Activated CD4-positive, alpha-beta T cell treated with anti-CD3 and anti-CD28 coated beads for 36 hours (primary cell): ENCODE measurements at regions of chr3 and their contacts with region 1.

Region 1: GRCh38 chr3:152268555-152269425 is at the start of gene MBNL1:
- DNase-seq: peak; percentile 93
- ATAC-seq: peak; percentile 69
- H3K4me3 Mint-ChIP-seq: peak within 1 kb of the TSS; percentile 79
- H3K27ac Mint-ChIP-seq: peak within 1 kb of the TSS; percentile 99
- H3K4me1 Mint-ChIP-seq: peaks cover 49% of the 10 kb centered on the region
- H3K27me3 Mint-ChIP-seq: no peaks in the 10 kb centered on the region
- total RNA-seq, gene MBNL1: 317 to 481 TPM

Region 2: DNA sequence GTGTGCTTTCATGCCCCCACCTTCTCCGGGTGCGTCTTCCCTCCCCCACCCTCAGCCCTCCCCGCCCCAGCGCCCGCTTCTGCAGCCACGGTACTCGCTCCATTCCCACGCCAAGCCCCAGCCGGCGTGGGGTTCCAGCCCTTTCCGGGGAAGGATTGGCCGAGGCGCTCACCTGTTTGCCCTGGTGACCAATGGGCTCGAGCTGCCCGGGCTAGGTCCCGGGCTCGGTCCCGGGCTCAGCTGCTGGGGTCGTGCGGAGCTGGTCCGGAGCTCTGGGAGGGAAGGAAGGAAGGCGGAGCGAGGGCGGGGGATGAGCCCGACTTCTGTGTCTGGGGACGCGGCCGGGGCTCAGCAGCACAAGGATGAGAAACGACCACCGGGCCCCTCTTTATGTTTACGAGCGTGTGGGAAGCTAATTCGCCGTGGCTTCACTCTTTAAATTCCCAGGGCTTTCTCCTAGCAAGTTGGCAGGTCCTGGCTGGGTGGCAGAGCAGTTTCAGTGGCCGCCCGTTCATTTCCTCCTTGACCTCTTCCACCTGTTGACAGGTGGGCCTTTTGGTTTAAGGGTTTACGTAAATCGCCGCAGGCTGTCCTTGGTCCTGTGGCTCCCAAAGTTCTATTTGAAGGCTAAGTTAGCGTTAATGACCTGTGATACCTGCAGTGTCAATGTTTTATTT is 807.9 kb before region 1 on chr3 and contains the start of gene IGSF10:
- CTCF ChIA-PET with region 1: no interaction called
- POLR2A ChIA-PET with region 1: no interaction called
- intact Hi-C with region 1: no loop called
- DNase-seq: no peak
- ATAC-seq: peak; percentile 19
- H3K4me3 Mint-ChIP-seq: peak within 1 kb of the TSS; percentile 19
- H3K27ac Mint-ChIP-seq: no peak within 1 kb of the TSS
- H3K4me1 Mint-ChIP-seq: peaks cover 3% of the 10 kb centered on the region
- H3K27me3 Mint-ChIP-seq: peaks cover 19% of the 10 kb centered on the region
- total RNA-seq, gene IGSF10: not detected

Region 3: DNA sequence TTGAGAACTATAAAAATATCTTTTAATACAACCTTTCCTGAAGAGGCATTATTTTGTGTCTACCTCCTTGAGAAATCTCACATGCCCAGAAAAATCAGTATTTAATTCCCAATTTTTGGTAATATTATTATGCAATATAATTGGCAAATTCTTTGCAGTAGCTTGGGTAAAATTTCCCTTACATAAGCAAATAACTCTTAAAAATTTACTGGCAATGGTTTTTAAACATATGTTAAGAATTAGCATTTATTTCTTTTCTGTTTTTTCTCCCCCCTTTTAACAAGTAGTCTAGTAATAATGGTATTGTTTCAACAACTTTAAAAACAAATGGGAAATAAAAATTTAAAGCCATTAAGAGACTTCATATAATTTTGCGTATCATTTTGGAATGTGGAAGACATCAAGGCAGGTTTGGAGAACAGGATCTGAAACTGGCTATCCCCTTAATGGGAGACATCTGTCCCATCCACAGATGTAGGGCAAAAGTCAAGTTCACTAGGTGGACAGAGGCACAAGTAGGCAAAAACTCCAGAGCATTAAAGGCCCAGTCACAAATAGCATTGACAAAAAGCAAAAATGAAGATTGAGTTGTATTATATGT is 624.7 kb before region 1 on chr3:
- CTCF ChIA-PET with region 1: no interaction called
- POLR2A ChIA-PET with region 1: no interaction called
- intact Hi-C with region 1: no loop called
- DNase-seq: no peak
- ATAC-seq: no peak
- H3K4me3 Mint-ChIP-seq: no peak overlapping the region
- H3K27ac Mint-ChIP-seq: no peak overlapping the region
- H3K4me1 Mint-ChIP-seq: no peaks in the 10 kb centered on the region
- H3K27me3 Mint-ChIP-seq: no peaks in the 10 kb centered on the region

Region 4: GRCh38 chr3:152060701-152061100 is 208.1 kb before region 1 on chr3:
- CTCF ChIA-PET with region 1: no interaction called
- POLR2A ChIA-PET with region 1: no interaction called
- intact Hi-C with region 1: no loop called
- DNase-seq: no peak
- ATAC-seq: no peak
- H3K4me3 Mint-ChIP-seq: no peak overlapping the region
- H3K27ac Mint-ChIP-seq: no peak overlapping the region
- H3K4me1 Mint-ChIP-seq: no peaks in the 10 kb centered on the region
- H3K27me3 Mint-ChIP-seq: no peaks in the 10 kb centered on the region

Region 5: GRCh38 chr3:152127058-152127457 is 141.7 kb before region 1 on chr3:
- CTCF ChIA-PET with region 1: no interaction called
- POLR2A ChIA-PET with region 1: no interaction called
- intact Hi-C with region 1: loop called (anchors 2 to 10 kb)
- DNase-seq: peak; percentile 33
- ATAC-seq: peak; percentile 95
- H3K4me3 Mint-ChIP-seq: peak overlapping the region; percentile 27
- H3K27ac Mint-ChIP-seq: peak overlapping the region; percentile 51
- H3K4me1 Mint-ChIP-seq: peaks cover 26% of the 10 kb centered on the region
- H3K27me3 Mint-ChIP-seq: no peaks in the 10 kb centered on the region

Region 6: DNA sequence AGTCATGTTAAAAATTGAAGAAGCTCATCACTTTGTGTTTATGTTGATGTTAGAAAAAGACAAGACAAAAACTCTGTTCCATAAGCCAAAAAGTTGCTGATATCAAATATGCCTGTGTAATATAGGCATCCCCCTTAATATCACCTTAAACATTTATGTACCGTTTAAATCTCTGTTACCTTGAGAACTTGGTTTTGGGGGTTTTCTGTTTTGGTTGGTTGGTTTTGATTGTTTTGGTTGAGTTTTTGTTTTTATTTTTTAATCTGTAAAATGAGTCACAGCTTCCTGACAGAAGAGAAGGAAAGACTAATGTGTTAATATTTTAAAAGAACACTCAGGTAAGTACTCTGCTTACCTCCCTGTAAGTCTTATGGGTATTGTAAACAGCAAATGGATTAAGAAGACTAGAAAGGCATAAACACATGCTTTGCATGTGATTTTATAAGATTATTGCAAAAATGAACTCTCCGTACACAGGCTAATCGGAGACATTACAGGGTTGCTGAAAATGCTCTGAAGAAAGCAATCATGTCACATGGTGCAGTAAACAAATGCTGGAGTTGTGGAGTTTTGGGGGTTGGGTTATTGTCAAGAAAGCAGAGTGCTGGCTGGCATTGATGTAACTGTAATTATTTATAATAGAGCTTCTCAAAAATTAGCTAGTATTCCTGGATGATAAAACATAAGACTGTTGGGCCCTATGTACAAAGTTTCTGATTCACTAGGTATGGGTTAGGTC is 69.5 kb before region 1 on chr3:
- CTCF ChIA-PET with region 1: interaction called, 3 read pairs
- POLR2A ChIA-PET with region 1: interaction called, 11 read pairs
- intact Hi-C with region 1: loop called (anchors 1 to 2 kb)
- DNase-seq: no peak
- ATAC-seq: peak; percentile 24
- H3K4me3 Mint-ChIP-seq: peak overlapping the region; percentile 72
- H3K27ac Mint-ChIP-seq: peak overlapping the region; percentile 96
- H3K4me1 Mint-ChIP-seq: peaks cover 67% of the 10 kb centered on the region
- H3K27me3 Mint-ChIP-seq: no peaks in the 10 kb centered on the region

Region 7: GRCh38 chr3:152241142-152242017 is 27.4 kb before region 1 on chr3:
- CTCF ChIA-PET with region 1: interaction called, 6 read pairs
- POLR2A ChIA-PET with region 1: interaction called, 15 read pairs
- intact Hi-C with region 1: loop called (anchors 1 to 2 kb)
- DNase-seq: no peak
- ATAC-seq: peak; percentile 50
- H3K4me3 Mint-ChIP-seq: peak overlapping the region; percentile 88
- H3K27ac Mint-ChIP-seq: peak overlapping the region; percentile 95
- H3K4me1 Mint-ChIP-seq: peaks cover 61% of the 10 kb centered on the region
- H3K27me3 Mint-ChIP-seq: no peaks in the 10 kb centered on the region

Region 8: DNA sequence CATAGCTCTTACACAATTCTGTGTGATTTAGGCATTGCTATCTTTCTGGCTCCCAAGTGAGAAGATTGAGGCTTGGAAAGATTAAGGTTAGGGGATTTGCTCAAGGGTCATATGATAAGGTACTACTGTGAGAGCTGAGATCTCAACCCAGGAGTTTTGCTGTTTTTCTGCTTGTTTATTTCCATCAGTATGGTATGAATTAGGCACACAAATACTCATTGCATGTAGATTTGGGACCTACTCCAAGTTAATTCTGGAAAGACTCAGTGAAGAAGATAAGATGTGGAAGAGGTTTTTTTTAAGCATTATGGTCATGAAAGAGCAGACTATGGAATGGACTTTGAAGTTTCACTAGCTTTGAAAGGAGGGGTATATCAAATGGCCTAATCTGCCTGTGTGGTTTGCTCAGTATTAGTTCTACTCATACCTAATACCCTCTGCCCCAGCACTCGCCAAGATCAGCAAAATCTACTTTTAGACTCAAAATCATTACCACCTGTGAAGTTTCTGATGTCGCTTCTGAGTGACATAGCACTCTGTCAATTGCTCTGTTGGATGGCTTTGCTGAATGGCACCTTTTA is 12.4 kb after region 1 on chr3:
- CTCF ChIA-PET with region 1: interaction called, 9 read pairs
- POLR2A ChIA-PET with region 1: interaction called, 4 read pairs
- intact Hi-C with region 1: loop called in 1 of 2 experiments (anchors 1 kb)
- DNase-seq: no peak
- ATAC-seq: peak; percentile 27
- H3K4me3 Mint-ChIP-seq: peak overlapping the region; percentile 48
- H3K27ac Mint-ChIP-seq: peak overlapping the region; percentile 84
- H3K4me1 Mint-ChIP-seq: peaks cover 79% of the 10 kb centered on the region
- H3K27me3 Mint-ChIP-seq: no peaks in the 10 kb centered on the region

Region 9: DNA sequence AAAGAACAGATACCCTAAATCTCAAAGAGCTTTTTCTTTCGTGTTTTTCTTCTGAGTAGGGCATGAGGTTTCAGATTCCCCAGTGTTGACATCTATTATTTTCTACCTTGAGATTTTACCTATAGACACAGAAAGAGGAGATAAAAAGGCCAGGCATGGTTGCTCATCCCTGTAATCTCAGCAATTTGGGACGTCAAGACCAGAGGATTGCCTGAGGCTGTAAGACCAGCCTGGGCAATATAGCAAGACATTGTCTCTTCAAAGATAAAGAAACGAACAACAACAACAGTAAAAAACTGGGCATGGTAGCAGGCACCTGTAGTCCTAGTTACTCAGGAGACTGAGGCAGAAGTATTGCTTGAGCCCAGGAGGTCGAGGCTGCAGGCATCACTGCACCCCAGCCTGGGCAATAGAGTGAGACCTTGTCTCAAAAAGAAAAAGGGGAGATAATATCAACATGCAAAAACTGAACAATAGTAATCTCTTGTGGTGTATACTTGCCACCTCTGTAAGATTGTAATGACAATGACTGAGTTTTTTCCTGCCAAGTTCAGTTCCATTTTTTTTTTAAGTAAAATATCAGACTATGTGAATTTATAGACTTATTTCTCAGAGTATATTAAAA is 71.2 kb after region 1 on chr3:
- CTCF ChIA-PET with region 1: no interaction called
- POLR2A ChIA-PET with region 1: no interaction called
- intact Hi-C with region 1: no loop called
- DNase-seq: no peak
- ATAC-seq: peak; percentile 6
- H3K4me3 Mint-ChIP-seq: no peak overlapping the region
- H3K27ac Mint-ChIP-seq: peak overlapping the region; percentile 52
- H3K4me1 Mint-ChIP-seq: peaks cover 64% of the 10 kb centered on the region
- H3K27me3 Mint-ChIP-seq: no peaks in the 10 kb centered on the region

Region 10: GRCh38 chr3:152444029-152444641 is 175.3 kb after region 1 on chr3:
- CTCF ChIA-PET with region 1: interaction called, 3 read pairs
- POLR2A ChIA-PET with region 1: no interaction called
- intact Hi-C with region 1: loop called (anchors 2 to 5 kb)
- DNase-seq: no peak
- ATAC-seq: no peak
- H3K4me3 Mint-ChIP-seq: no peak overlapping the region
- H3K27ac Mint-ChIP-seq: peak overlapping the region; percentile 43
- H3K4me1 Mint-ChIP-seq: peaks cover 64% of the 10 kb centered on the region
- H3K27me3 Mint-ChIP-seq: no peaks in the 10 kb centered on the region